ENCODE measurements at regions of chr4 and their contacts with region 1.

Region 1: DNA sequence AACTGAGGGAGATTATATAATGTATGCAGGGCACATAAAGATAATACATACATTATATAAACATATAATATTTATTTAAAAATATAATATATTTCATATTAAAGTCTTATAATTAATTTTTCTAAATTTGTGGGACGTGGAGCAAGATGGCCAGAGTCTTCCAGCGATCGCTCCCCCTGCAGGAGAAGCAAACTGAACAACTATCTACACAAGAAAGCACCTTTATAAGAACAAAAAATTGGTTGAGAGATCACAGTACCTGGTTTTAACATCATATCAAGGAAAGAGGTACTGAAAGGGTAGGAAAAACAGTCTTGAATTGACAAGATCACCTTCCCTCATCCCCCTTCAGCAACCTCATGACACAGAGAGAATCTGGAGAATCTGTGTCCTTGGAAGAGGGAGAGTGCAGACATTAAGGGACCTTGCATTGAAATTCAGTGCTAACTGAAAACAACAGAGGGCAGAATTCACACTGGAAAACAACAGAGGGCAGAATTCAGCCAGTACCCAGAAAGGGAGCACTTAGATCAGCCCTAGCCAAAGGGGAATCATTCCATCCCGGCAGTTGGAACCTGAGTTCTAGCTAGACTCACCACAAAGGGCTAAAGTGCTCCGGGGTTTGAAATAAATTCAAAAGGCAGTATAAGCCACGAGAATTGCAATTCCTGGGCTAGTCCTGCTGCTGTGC is 262.5 kb upstream of the NDST3 start:
- DNase-seq: no peak
- ATAC-seq: peak; percentile 22; the same call in 1 of the 2 replicates
- H3K4me3 ChIP-seq: no peak overlapping the region
- H3K27ac ChIP-seq: no peak overlapping the region
- H3K4me1 ChIP-seq: no peaks in the 10 kb centered on the region; the same call in none of the 2 replicates
- H3K27me3 ChIP-seq: no peaks in the 10 kb centered on the region
- CTCF ChIP-seq: no peak

Region 2: GRCh38 chr4:117400039-117400835 is 371.6 kb before region 1 on chr4:
- CTCF ChIA-PET with region 1: no interaction called
- POLR2A ChIA-PET with region 1: no interaction called
- intact Hi-C with region 1: loop called (anchors 5 kb)
- DNase-seq: peak; percentile 81
- ATAC-seq: peak; percentile 97
- H3K4me3 ChIP-seq: peak overlapping the region; percentile 59
- H3K27ac ChIP-seq: peak overlapping the region; percentile 72
- H3K4me1 ChIP-seq: peaks cover 28% of the 10 kb centered on the region
- H3K27me3 ChIP-seq: no peaks in the 10 kb centered on the region
- CTCF ChIP-seq: no peak

Region 3: DNA sequence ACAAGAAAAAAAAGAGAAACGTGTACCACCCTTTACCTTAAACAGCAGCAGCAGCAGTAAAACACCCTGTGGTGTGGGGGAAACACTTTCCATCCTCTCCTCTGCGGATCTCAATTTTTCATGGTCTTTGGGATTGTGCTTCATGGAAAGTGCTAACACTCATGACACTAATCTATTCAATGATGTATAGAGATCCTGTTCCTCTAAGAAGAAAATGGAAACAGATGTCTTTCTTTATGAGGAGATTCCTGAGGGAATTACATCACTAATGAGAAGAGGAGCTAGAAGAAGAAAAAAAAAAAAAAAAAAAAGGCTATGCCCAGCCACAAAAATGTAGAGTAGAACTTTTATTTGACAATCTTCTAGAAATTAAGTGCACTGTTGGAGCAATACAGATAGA is 199.6 kb after region 1 on chr4:
- CTCF ChIA-PET with region 1: no interaction called
- POLR2A ChIA-PET with region 1: no interaction called
- intact Hi-C with region 1: loop called (anchors 10 kb)
- DNase-seq: no peak
- ATAC-seq: no peak
- H3K4me3 ChIP-seq: no peak overlapping the region
- H3K27ac ChIP-seq: no peak overlapping the region
- H3K4me1 ChIP-seq: no peaks in the 10 kb centered on the region
- H3K27me3 ChIP-seq: no peaks in the 10 kb centered on the region
- CTCF ChIP-seq: no peak